ENCODE measurements at regions of chr2 and their contacts with region 1.

Region 1: GRCh38 chr2:234544659-234545611 is 48.1 kb upstream of the ARL4C start:
- DNase-seq: peak in 1 of 2 donors; percentile 30
- ATAC-seq: peak in 1 of 2 donors; percentile 75
- H3K4me3 ChIP-seq: no peak overlapping the region
- H3K27ac ChIP-seq: no peak overlapping the region
- H3K4me1 ChIP-seq: no peaks in the 10 kb centered on the region
- H3K27me3 ChIP-seq: peaks cover 0 to 2% (median 0%) of the 10 kb centered on the region in 3 donors
- CTCF ChIP-seq: peak; percentile 44 to 89 (median 78)
- POLR2A ChIP-seq: no peak

Region 2: GRCh38 chr2:233976690-233977294 is 568.1 kb before region 1 on chr2:
- in situ Hi-C with region 1: loop called in 2 of 4 experiments (anchors 25 kb)
- intact Hi-C with region 1: loop called (anchors 10 kb)
- DNase-seq: no peak
- ATAC-seq: no peak
- H3K4me3 ChIP-seq: no peak overlapping the region
- H3K27ac ChIP-seq: no peak overlapping the region
- H3K4me1 ChIP-seq: no peaks in the 10 kb centered on the region
- H3K27me3 ChIP-seq: no peaks in the 10 kb centered on the region
- CTCF ChIP-seq: no peak
- POLR2A ChIP-seq: no peak

Region 3: GRCh38 chr2:234269769-234270204 is 275.1 kb before region 1 on chr2:
- in situ Hi-C with region 1: no loop called
- intact Hi-C with region 1: no loop called
- DNase-seq: no peak
- ATAC-seq: no peak
- H3K4me3 ChIP-seq: no peak overlapping the region
- H3K27ac ChIP-seq: no peak overlapping the region
- H3K4me1 ChIP-seq: no peaks in the 10 kb centered on the region
- H3K27me3 ChIP-seq: no peaks in the 10 kb centered on the region
- CTCF ChIP-seq: no peak
- POLR2A ChIP-seq: no peak

Region 4: DNA sequence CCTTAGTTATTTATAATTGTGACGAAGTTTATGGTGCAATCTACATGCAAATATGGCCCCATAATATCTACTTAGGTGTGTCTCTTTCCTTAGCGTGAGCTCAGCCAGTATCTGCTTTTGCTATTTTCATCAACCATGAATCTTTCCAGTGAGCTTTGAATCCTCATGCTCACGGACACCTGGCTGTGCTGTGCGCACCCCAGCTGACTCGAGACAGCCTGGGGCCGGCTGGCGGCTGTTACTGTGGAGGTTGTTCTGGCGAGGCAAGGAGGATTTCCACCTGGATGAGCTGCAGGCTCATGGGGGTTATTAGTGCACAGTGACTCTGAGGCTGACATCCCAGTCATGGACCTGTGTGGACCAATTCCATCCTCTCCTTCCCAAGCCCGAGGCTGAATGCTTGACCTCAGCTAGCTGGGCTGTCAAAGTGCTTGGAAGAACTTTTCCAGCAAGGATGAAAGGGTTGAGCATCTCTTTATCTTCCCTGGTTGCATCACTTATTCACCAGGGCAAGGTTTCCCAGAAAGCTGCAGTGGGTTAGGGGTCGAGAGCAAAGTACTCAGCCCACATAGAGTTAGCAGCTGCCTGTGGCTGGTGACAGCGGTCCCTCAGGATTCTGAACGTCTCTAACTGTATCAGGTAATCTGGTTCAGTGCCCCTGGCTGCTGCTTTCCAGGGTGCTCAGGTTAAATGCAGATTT is 189.8 kb before region 1 on chr2:
- in situ Hi-C with region 1: no loop called
- intact Hi-C with region 1: no loop called
- DNase-seq: no peak
- ATAC-seq: no peak
- H3K4me3 ChIP-seq: no peak overlapping the region
- H3K27ac ChIP-seq: no peak overlapping the region
- H3K4me1 ChIP-seq: no peaks in the 10 kb centered on the region
- H3K27me3 ChIP-seq: peaks cover 0 to 3% (median 0%) of the 10 kb centered on the region in 3 donors
- CTCF ChIP-seq: no peak
- POLR2A ChIP-seq: no peak